ENCODE measurements at regions of chr3 and their contacts with region 1.

Region 1: DNA sequence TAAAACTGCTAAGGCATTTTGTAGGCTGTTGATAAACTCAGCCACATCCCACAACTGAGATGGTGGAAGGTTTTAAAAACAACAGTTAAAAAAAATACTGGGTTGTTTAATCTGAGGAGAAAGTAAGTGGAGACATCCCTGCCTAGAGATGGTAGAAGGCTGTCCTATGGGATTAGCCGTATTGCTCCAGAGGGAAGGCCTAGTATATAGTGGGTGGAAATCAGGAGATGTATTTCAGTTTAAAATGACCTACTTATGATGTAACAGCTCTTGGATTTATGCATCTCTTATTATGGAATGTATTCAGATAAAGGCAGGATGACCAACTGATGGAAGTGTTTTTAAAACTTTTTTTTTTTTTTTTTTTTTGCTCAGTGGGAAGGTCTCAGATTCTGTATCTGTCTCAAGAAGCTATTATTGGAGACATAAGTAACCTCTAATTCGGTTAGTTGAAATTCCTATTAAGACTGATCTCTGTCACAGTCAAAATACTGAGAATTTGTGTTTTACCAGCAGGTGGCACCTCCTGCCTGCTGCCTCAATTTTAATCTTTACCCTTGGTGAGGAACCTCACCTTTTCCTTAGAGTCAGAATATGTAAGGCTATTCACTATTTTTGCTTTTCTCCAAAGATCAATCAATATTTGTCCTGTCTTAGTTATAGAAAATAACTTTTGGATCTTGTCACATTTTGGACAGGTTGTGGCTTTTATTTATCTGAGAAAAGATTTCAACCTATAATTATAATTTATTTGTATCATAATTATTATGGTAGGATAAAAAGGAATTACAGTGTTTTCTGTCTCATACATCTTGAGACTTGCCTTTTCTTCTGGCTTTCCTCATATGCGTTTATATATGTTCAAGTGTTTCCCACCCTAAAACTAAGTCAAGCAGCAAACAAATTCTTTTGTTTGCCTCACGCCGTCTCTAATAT is 63.0 kb downstream of the VPS8 start:
- DNase-seq: peak; percentile 36
- ATAC-seq: no peak
- H3K4me3 Mint-ChIP-seq: no peak overlapping the region
- H3K27ac Mint-ChIP-seq: no peak overlapping the region
- H3K4me1 Mint-ChIP-seq: peaks cover 5% of the 10 kb centered on the region
- H3K27me3 Mint-ChIP-seq: no peaks in the 10 kb centered on the region

Region 2: GRCh38 chr3:185176750-185177359 is 301.9 kb after region 1 on chr3:
- CTCF ChIA-PET with region 1: interaction called, 5 read pairs
- POLR2A ChIA-PET with region 1: no interaction called
- intact Hi-C with region 1: loop called in 1 of 2 experiments (anchors 1 kb)
- DNase-seq: peak; percentile 55
- ATAC-seq: no peak
- H3K4me3 Mint-ChIP-seq: no peak overlapping the region
- H3K27ac Mint-ChIP-seq: no peak overlapping the region
- H3K4me1 Mint-ChIP-seq: no peaks in the 10 kb centered on the region
- H3K27me3 Mint-ChIP-seq: peaks cover 7% of the 10 kb centered on the region

Region 3: GRCh38 chr3:185215873-185216606 is 341.1 kb after region 1 on chr3:
- CTCF ChIA-PET with region 1: no interaction called
- POLR2A ChIA-PET with region 1: no interaction called
- intact Hi-C with region 1: loop called in 1 of 2 experiments (anchors 1 kb)
- DNase-seq: no peak
- ATAC-seq: no peak
- H3K4me3 Mint-ChIP-seq: no peak overlapping the region
- H3K27ac Mint-ChIP-seq: no peak overlapping the region
- H3K4me1 Mint-ChIP-seq: no peaks in the 10 kb centered on the region
- H3K27me3 Mint-ChIP-seq: no peaks in the 10 kb centered on the region

Measured in activated CD4-positive, alpha-beta T cell treated with anti-CD3 and anti-CD28 coated beads for 36 hours (primary cell).